ENCODE measurements at regions of chrX and their contacts with region 1.

Region 1: GRCh38 chrX:8424912-8425311 is 39.7 kb upstream of the VCX3B start:
- DNase-seq: peak; percentile 35
- H3K4me3 Mint-ChIP-seq: peak overlapping the region; percentile 30
- H3K27ac Mint-ChIP-seq: no peak overlapping the region
- H3K4me1 Mint-ChIP-seq: peaks cover 11% of the 10 kb centered on the region
- H3K27me3 Mint-ChIP-seq: no peaks in the 10 kb centered on the region
- CTCF ChIP-seq: no peak

Region 2: GRCh38 chrX:8404438-8404837 is 20.5 kb before region 1 on chrX:
- CTCF ChIA-PET with region 1: no interaction called
- POLR2A ChIA-PET with region 1: interaction called, 11 read pairs
- intact Hi-C with region 1: no loop called
- DNase-seq: peak; percentile 45
- H3K4me3 Mint-ChIP-seq: peak overlapping the region; percentile 47
- H3K27ac Mint-ChIP-seq: peak overlapping the region; percentile 25
- H3K4me1 Mint-ChIP-seq: no peaks in the 10 kb centered on the region
- H3K27me3 Mint-ChIP-seq: no peaks in the 10 kb centered on the region
- CTCF ChIP-seq: no peak